Panc1 (cell line): ENCODE measurements at regions of chr6 and their contacts with region 1.

Region 1: DNA sequence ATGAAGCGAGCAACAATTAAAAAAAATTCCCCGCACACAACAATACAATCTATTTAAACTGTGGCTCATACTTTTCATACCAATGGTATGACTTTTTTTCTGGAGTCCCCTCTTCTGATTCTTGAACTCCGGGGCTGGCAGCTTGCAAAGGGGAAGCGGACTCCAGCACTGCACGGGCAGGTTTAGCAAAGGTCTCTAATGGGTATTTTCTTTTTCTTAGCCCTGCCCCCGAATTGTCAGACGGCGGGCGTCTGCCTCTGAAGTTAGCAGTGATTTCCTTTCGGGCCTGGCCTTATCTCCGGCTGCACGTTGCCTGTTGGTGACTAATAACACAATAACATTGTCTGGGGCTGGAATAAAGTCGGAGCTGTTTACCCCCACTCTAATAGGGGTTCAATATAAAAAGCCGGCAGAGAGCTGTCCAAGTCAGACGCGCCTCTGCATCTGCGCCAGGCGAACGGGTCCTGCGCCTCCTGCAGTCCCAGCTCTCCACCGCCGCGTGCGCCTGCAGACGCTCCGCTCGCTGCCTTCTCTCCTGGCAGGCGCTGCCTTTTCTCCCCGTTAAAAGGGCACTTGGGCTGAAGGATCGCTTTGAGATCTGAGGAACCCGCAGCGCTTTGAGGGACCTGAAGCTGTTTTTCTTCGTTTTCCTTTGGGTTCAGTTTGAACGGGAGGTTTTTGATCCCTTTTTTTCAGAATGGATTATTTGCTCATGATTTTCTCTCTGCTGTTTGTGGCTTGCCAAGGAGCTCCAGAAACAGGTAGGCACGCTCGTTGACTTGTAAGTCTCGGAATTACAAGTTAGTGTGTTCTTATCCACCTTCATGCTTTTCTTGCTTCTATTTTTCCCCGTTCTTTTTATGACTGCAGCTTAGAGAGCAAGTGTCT is at the start of gene EDN1:
- DNase-seq: peak; percentile 43
- ATAC-seq: peak; percentile 76
- H3K4me3 ChIP-seq: peak within 1 kb of the TSS; percentile 60 to 67
- H3K27ac ChIP-seq: peak within 1 kb of the TSS; percentile 93
- H3K4me1 ChIP-seq: peaks cover 61% of the 10 kb centered on the region
- H3K27me3 ChIP-seq: no peaks in the 10 kb centered on the region
- CTCF ChIP-seq: peak; percentile 22; the same call in 1 of the 2 replicates
- total RNA-seq, gene EDN1: 15.1 TPM

Region 2: GRCh38 chr6:11585426-11586016 is 704.7 kb before region 1 on chr6:
- CTCF ChIA-PET with region 1: interaction called, 3 read pairs
- POLR2A ChIA-PET with region 1: no interaction called
- in situ Hi-C with region 1: no loop called
- intact Hi-C with region 1: loop called (anchors 2 kb)
- DNase-seq: peak; percentile 36
- ATAC-seq: no peak
- H3K4me3 ChIP-seq: no peak overlapping the region
- H3K27ac ChIP-seq: no peak overlapping the region
- H3K4me1 ChIP-seq: no peaks in the 10 kb centered on the region
- H3K27me3 ChIP-seq: no peaks in the 10 kb centered on the region
- CTCF ChIP-seq: peak; percentile 70; the same call in 1 of the 2 replicates

Region 3: DNA sequence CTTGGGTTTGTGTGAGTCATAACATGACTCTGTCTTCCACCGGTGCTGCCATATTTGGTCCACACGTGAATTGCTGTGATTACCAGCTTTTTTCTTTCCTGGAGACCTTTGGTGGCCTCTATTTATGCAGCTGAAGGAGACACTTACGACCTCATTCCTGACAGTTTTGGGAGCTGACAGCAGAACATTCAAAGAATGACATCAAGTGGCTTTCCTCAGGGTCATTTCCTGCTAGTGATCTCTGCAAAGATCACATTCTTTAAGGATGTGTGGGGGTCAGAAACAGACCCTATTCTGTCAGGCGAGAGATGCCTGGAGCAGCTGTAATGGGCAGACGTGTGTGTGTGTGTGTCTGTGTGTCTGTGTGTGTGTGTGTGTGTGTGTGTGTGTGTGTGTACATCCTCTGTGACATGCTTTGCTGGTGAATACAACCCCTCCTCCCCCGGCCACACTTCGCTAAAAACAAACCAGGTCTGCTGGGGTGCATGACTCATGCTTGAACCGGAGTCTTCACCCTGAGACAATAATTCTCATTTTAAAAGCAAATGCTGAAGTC is 637.1 kb before region 1 on chr6:
- CTCF ChIA-PET with region 1: interaction called, 6 read pairs
- POLR2A ChIA-PET with region 1: no interaction called
- in situ Hi-C with region 1: no loop called
- intact Hi-C with region 1: loop called (anchors 1 kb)
- DNase-seq: no peak
- ATAC-seq: no peak
- H3K4me3 ChIP-seq: no peak overlapping the region
- H3K27ac ChIP-seq: no peak overlapping the region
- H3K4me1 ChIP-seq: no peaks in the 10 kb centered on the region
- H3K27me3 ChIP-seq: no peaks in the 10 kb centered on the region
- CTCF ChIP-seq: no peak

Region 4: DNA sequence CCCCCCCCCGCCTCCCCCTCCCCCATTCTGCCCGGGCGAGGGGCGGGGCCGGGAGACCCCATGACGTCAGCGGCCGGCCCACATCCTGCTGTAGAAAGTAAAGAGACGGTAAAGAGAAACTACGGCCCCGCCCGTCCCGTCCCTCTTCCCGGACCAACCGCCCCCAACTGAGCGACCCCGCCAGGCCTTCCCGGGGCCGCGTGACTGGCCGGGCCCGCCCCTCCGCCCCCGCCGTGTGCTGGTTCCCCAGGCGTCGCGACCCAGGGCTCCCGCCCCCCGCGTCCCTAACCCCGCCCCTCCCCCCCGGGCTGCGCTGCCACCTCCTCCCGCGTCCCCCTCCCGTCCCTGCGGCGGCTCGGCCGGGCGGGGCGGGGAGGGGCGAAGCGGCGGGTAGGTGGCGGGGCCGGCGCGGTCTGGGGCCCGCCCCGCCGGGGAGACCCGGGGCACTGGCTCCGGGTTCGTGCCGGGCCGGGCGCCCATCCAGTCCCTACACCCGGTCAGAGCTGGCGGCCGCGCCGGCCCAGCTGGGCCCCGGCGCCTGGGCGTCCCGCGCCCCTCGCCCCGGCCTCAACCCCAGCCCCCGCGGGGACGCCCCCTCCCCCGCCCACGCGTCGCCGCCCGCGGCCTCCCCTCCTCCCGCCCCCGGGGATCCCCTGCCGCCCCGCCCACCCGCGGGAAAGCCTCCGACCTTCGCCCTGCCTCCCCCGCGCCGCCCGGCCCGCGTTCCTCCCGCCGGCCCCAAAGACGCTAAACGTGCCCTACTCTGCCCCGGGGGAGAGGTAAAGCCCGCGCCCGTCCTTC is 278.7 kb before region 1 on chr6:
- CTCF ChIA-PET with region 1: no interaction called
- POLR2A ChIA-PET with region 1: no interaction called
- in situ Hi-C with region 1: no loop called
- intact Hi-C with region 1: loop called (anchors 5 kb)
- DNase-seq: peak; percentile 59
- ATAC-seq: peak; percentile 84
- H3K4me3 ChIP-seq: peak overlapping the region; percentile 70 to 84
- H3K27ac ChIP-seq: no peak overlapping the region
- H3K4me1 ChIP-seq: peaks cover 36% of the 10 kb centered on the region
- H3K27me3 ChIP-seq: no peaks in the 10 kb centered on the region
- CTCF ChIP-seq: no peak

Region 5: DNA sequence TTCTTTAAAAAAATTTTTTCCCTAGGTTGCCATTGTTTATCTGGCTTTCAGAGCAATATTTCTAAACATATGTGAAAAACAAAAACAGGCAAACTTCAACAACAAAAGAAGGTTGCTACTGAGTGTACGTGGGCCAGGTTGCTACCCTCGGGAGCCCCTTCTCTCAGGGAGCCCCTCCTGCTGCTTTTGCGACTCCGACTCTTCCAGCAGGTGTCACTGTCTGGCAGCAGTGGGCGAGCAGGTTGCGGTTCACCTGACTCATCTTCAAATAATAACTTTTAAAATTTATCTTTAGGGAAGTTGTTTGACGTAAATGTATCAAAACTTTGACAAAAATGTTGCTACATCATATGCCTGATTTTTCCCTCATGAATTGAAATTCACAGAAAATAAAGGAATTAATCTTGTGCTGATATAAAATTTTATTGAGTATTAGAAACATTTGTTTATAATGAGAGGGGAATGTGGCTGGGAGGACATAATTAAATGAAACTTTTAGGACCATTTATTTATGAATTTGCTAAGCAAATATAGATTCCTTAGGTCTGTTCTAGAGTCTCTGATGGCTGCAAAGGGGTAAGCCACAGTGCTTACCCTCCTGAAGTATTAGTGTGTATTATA is 139.3 kb before region 1 on chr6:
- CTCF ChIA-PET with region 1: no interaction called
- POLR2A ChIA-PET with region 1: no interaction called
- in situ Hi-C with region 1: no loop called
- intact Hi-C with region 1: loop called (anchors 1 kb)
- DNase-seq: no peak
- ATAC-seq: no peak
- H3K4me3 ChIP-seq: no peak overlapping the region
- H3K27ac ChIP-seq: no peak overlapping the region
- H3K4me1 ChIP-seq: peaks cover 24% of the 10 kb centered on the region
- H3K27me3 ChIP-seq: no peaks in the 10 kb centered on the region
- CTCF ChIP-seq: peak; percentile 85

Region 6: GRCh38 chr6:12343440-12344162 is 53.4 kb after region 1 on chr6:
- CTCF ChIA-PET with region 1: interaction called, 3 read pairs
- POLR2A ChIA-PET with region 1: interaction called, 6 read pairs
- in situ Hi-C with region 1: no loop called
- intact Hi-C with region 1: loop called (anchors 5 kb)
- DNase-seq: no peak
- ATAC-seq: peak; percentile 76
- H3K4me3 ChIP-seq: peak overlapping the region in 1 of 2 experiments; percentile 31; a peak in 2 of 4 replicates
- H3K27ac ChIP-seq: peak overlapping the region; percentile 98
- H3K4me1 ChIP-seq: peaks cover 43% of the 10 kb centered on the region
- H3K27me3 ChIP-seq: no peaks in the 10 kb centered on the region
- CTCF ChIP-seq: no peak

Region 7: DNA sequence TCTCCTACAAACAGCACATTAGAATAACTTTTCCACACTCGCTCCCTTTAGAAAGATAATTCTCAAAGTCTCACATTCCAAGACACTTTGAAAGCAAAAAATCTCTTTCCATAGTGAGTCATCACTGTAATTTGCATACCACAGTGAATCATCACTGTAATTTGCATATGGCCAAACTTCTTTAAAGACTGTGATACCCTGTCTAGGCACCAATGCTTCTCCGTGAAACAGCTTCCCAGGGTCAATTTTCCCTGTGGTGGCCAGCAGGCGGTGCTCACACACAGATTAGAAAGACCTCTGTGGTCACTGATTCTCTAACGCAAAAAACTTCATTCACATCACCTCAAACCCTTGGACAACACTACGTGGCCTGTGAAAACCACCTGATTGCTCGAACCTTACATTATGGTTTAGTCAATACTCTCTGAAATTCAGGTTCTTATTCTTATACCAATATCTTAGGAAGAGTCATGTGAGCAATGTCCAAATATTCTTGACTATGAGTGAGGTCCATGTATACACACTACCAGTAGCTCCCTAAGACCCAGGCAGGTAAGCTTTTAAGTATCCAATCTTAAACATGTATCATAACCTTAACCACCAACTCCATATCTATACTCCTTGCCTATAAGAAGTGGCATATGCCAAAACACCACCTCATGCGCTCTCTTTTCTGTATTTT is 347.9 kb after region 1 on chr6:
- CTCF ChIA-PET with region 1: no interaction called
- POLR2A ChIA-PET with region 1: interaction called, 22 read pairs
- in situ Hi-C with region 1: no loop called
- intact Hi-C with region 1: no loop called
- DNase-seq: peak; percentile 24
- ATAC-seq: peak; percentile 91
- H3K4me3 ChIP-seq: no peak overlapping the region
- H3K27ac ChIP-seq: no peak overlapping the region
- H3K4me1 ChIP-seq: no peaks in the 10 kb centered on the region
- H3K27me3 ChIP-seq: 0 out of 2 replicates have a peak, but pooled peaks cover 2% of the 10 kb centered on the region
- CTCF ChIP-seq: peak; percentile 93